ENCODE measurements at regions of chr14 and their contacts with region 1.

Region 1: GRCh38 chr14:74612350-74613021 is 449 bp upstream of the LTBP2 start:
- ATAC-seq: peak; percentile 76 to 91 (median 85)
- H3K4me3 ChIP-seq: peak overlapping the region; percentile 38 to 48 (median 43)
- H3K27ac ChIP-seq: no peak overlapping the region
- H3K4me1 ChIP-seq: no peaks in the 10 kb centered on the region

Region 2: DNA sequence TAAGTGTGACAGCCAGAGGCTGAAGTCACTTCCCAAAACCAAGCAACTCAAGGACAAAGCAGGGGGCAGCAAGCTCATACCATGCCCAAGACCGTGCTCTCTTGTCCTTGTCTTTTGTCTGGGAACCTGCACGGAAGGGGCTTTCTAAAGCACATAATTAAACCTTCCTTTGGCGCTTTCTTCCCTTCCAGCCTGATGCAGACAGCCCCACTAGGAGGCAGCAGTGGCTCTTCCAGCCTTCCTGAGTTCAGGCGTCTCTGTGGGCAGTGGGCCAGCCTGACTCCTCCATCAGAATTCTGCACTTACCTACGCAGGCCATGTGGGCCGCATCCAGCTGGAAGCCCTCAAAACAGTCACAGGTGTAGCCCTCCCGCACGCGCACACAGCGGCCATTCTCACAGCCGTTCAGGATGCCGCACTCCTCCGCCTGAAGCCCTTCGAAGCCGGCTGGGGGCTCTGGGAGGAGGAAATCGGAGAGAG is 111.3 kb before region 1 on chr14:
- in situ Hi-C with region 1: loop called in 1 of 9 experiments (anchors 25 kb)
- ATAC-seq: peak; percentile 71 to 85 (median 78)
- H3K4me3 ChIP-seq: no peak overlapping the region
- H3K27ac ChIP-seq: no peak overlapping the region
- H3K4me1 ChIP-seq: peaks cover 7 to 16% of the 10 kb centered on the region in 2 donors

Measured in motor neuron (in vitro differentiated cells).